ENCODE measurements at regions of chr17 and their contacts with region 1.

Region 1: DNA sequence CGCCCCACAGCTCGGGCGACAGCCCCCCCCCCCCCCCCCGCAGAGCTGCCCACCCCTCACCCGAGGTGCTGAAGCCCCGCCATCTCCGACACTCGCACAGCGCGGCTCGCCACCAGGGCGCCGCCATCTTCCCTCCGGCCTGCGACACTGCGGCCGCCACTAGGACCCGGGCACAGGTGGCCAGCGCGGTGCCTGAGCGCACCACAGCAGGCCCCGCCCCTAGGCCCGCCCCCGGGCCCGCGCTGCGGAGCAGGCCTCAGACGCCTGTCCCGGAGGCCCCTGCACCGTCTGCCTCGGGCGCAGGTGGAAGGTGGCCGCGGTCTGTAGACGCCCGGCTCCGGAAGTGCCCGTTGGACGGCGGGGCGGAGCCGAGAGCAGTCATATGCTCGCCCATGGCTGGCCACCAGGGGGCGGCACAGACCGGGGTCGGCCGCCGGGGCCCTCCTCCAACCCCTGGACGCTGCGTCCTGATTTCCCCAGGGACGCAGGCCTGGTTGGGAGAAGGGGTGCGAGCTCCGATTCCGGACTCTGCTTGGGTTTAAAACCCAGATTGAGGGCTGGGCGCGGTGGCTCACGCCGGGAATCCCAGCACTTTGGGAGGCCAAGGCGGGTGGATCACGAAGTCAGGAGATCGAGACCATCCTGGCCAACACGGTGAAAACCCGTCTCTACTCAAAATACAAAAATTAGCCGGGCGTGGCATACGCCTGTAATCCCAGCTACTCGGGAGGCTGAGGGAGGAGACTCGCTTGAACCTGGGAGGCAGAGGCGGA is at the start of gene MRPL38:
- DNase-seq: peak; percentile 73 to 96
- H3K4me3 ChIP-seq: peak within 1 kb of the TSS; percentile 74 to 79
- H3K27ac ChIP-seq: peak within 1 kb of the TSS; percentile 85 to 94
- H3K4me1 ChIP-seq: peaks cover 5 to 6% of the 10 kb centered on the region in 2 donors
- H3K27me3 ChIP-seq: no peaks in the 10 kb centered on the region
- CTCF ChIP-seq: peak; percentile 98 to 100 (median 99)
- total RNA-seq, gene MRPL38: 31.9 TPM

Region 2: GRCh38 chr17:75877752-75878173 is 27.2 kb before region 1 on chr17:
- intact Hi-C with region 1: loop called (anchors 2 kb)
- DNase-seq: peak in 1 of 2 donors; percentile 86
- H3K4me3 ChIP-seq: peak overlapping the region; percentile 85 to 96
- H3K27ac ChIP-seq: peak overlapping the region; percentile 96 to 99
- H3K4me1 ChIP-seq: peaks cover 33 to 45% of the 10 kb centered on the region in 2 donors
- H3K27me3 ChIP-seq: no peaks in the 10 kb centered on the region
- CTCF ChIP-seq: peak in 2 of 3 experiments; percentile 48 to 51

Region 3: GRCh38 chr17:75940724-75941441 is 35.9 kb after region 1 on chr17 and contains the start of gene FBF1:
- intact Hi-C with region 1: loop called (anchors 2 kb)
- DNase-seq: peak; percentile 76 to 97
- H3K4me3 ChIP-seq: peak within 1 kb of the TSS; percentile 84 to 97
- H3K27ac ChIP-seq: peak within 1 kb of the TSS; percentile 72 to 76
- H3K4me1 ChIP-seq: peaks cover 0 to 8% of the 10 kb centered on the region in 2 donors
- H3K27me3 ChIP-seq: no peaks in the 10 kb centered on the region
- CTCF ChIP-seq: peak in 1 of 3 experiments; percentile 7
- total RNA-seq, gene FBF1: 8.9 TPM

Region 4: DNA sequence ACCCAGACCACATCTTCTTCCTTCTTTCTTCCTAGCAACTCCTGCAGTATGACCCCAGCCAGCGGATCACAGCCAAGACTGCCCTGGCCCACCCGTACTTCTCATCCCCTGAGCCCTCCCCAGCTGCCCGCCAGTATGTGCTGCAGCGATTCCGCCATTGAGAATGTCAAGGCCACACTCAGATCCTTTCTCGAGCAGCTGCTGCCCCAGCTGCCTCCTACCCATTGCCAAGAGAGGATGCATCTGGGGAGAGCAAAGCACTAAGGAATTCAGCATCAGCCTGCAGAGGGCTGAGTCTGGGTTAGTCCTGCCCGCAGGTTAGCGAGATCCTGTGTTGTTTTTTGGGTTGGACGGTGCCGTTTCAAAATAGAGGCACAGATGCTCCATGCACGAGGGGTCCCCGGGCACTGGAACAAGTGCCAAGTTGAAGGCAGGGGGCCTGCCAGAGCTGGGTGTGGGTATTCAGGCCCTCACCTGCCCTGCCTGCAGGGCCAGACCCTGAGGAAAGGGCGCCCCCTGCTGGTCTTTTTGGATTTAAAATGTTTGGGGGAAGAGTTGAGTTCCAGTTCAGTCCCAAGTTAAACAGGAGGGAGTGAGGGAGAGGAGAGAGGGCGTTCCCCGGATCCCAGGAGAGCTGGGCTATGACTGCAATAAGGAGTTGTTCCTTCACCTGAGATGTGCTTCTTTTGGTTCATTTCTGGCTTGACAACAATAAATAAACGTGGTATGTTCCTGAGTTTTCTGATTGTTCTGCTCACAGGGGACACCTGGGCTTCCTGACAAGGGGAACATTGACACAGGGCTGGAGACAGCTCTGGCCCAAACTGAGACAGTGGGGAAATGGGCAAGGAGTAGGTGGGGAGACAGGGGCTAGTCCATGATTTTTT is 100.6 kb after region 1 on chr17:
- intact Hi-C with region 1: loop called (anchors 2 kb)
- DNase-seq: peak in 1 of 2 donors; percentile 80
- H3K4me3 ChIP-seq: no peak overlapping the region
- H3K27ac ChIP-seq: no peak overlapping the region
- H3K4me1 ChIP-seq: no peaks in the 10 kb centered on the region
- H3K27me3 ChIP-seq: no peaks in the 10 kb centered on the region
- CTCF ChIP-seq: peak; percentile 42 to 56 (median 45)

Region 5: DNA sequence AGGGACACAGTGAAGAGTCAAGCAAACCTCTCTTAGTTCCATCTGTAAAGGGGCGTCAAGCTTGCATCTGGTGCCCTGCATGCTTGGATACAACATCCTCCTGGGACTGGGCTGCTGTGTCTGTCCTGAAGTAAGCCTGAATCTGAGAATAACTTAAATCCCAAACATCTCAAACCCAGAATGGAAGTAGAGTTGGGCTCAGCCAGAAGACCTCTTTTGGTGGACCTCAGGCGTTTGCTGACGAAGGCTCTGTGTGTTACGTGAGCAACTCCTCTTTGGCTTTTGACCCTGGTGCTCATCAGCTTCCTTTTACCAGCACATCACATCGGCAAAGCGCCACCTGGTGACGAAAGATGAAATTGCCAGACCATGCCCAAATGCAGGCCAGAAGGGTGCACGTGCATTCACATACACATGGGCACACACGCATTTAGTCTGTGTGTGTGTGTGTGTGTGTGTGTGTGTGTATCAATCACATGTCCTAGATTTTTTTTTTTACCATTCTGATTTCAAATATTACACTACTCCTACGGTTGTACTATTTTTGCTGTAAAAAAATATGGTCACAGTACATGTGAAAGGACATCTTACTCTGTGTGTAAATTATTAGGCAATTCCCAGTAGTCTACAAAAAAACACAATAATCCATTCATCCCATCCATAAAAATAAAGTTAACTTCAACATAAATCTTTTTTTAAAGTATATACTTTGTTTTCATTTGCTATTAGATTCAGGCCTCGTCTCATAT is 277.3 kb after region 1 on chr17:
- intact Hi-C with region 1: loop called (anchors 5 kb)
- DNase-seq: peak; percentile 69 to 95
- H3K4me3 ChIP-seq: no peak overlapping the region
- H3K27ac ChIP-seq: no peak overlapping the region
- H3K4me1 ChIP-seq: no peaks in the 10 kb centered on the region
- H3K27me3 ChIP-seq: no peaks in the 10 kb centered on the region
- CTCF ChIP-seq: peak; percentile 76 to 87 (median 78)

Region 6: DNA sequence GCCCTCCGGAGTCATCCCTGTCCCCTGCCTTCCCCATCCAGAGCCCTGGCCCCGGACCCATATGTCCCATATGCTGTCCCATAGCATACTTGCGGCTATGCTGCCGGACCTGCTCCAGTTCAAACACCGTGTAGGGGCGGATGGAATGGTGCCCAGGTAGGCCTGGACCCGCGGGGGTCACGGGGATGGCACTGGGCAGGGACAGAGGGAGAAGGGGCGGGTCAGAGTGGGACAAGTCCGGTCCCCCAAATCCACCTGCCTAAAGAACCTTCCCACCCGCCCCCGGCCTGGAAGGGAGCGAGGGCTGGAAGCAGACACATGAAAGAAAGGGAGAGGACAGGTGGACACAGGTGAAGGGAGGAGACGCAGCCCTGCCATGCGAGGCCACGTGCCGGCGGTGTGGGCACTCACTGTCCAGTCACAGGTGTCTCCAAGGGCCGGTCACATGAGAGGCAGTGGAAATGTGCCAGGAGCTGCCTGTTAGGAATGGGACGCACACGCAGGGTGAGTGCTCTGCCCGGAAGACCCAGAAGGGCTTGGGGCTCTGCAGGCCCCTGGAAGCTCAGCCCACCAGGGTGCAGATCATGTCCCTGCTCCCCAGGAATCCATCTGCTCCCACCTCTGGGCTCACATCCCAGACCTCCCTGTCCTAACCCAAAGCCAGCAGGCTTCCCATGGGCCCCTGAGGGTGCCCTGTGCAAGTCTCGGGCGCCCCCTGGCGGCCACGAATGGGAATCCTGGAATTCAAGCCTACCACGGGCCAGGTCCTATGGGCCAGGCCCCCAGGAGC is 374.2 kb after region 1 on chr17:
- intact Hi-C with region 1: loop called (anchors 10 kb)
- DNase-seq: peak; percentile 47 to 92
- H3K4me3 ChIP-seq: no peak overlapping the region
- H3K27ac ChIP-seq: no peak overlapping the region
- H3K4me1 ChIP-seq: peaks cover 0 to 3% of the 10 kb centered on the region in 2 donors
- H3K27me3 ChIP-seq: no peaks in the 10 kb centered on the region
- CTCF ChIP-seq: peak; percentile 86 to 98 (median 93)